Activated naive CD4-positive, alpha-beta T cell treated with anti-CD3 and anti-CD28 coated beads for 36 hours (primary cell): ENCODE measurements at regions of chr15 and their contacts with region 1.

Region 1: GRCh38 chr15:79853458-79854328 is 43.1 kb downstream of the MTHFS start:
- DNase-seq: peak; percentile 83
- H3K4me3 Mint-ChIP-seq: no peak overlapping the region
- H3K27ac Mint-ChIP-seq: no peak overlapping the region
- H3K4me1 Mint-ChIP-seq: peaks cover 17% of the 10 kb centered on the region
- H3K27me3 Mint-ChIP-seq: no peaks in the 10 kb centered on the region

Region 2: GRCh38 chr15:79339564-79340314 is 514.0 kb before region 1 on chr15:
- CTCF ChIA-PET with region 1: interaction called, 7 read pairs
- intact Hi-C with region 1: loop called (anchors 5 kb)
- DNase-seq: no peak
- H3K4me3 Mint-ChIP-seq: no peak overlapping the region
- H3K27ac Mint-ChIP-seq: no peak overlapping the region
- H3K4me1 Mint-ChIP-seq: no peaks in the 10 kb centered on the region
- H3K27me3 Mint-ChIP-seq: no peaks in the 10 kb centered on the region

Region 3: DNA sequence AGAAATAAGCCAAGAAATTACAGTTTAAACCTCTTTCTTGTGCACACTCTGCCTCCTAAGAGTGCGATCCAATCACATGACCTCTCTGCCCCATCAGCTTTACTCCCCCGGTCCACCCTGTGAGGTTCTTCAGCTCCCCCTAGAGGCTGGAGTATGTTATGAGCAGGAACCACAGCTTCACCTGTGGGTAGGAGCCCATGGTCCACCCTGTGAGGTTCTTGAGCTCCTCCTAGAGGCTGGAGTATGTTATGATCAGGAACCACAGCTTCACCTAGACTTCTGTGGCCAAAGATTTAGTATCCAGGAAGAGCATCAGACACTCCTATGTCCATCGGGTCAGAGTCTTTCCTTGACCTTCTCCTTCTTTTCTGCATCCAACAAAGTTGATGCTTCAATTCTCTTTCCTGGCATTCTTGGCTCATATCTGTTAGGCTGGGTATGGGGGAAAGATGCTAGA is 257.6 kb before region 1 on chr15:
- CTCF ChIA-PET with region 1: interaction called, 5 read pairs
- intact Hi-C with region 1: loop called (anchors 2 kb)
- DNase-seq: peak; percentile 75
- H3K4me3 Mint-ChIP-seq: no peak overlapping the region
- H3K27ac Mint-ChIP-seq: no peak overlapping the region
- H3K4me1 Mint-ChIP-seq: no peaks in the 10 kb centered on the region
- H3K27me3 Mint-ChIP-seq: peaks cover 10% of the 10 kb centered on the region

Region 4: DNA sequence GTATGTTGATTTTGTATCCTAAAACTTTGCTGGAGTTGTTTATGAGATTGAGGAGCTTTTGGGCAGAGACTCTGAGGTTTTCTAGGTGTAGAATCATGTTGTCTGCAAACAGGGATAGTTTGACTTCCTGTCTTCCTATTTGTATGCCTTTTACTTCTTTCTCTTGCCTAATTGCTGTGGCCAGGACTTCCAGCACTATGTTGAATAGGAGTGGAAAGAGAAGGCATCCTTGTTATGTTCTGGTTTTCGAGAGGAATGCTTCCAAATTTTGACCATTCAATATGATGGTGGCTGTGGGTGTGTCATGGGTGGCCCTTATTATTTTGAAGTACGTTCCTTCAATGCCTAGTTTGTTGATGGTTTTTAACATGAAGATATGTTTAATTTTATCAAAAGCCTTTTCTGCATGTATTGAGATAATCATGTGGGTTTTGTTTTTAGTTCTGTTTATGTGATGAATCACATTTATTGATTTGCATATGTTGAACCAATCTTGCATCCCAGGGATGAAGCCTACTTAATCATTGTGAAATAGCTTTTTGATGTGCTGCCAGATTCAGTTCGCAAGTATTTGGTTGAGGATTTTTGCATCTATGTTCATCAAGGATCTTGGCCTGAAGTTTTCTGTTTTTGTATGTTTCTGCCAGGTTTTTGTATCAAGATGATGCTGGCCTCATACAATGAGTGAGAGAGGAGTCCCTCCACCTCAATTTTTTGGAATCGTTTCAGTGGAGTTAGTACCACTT is 233.4 kb before region 1 on chr15:
- CTCF ChIA-PET with region 1: no interaction called
- intact Hi-C with region 1: no loop called
- DNase-seq: no peak
- H3K4me3 Mint-ChIP-seq: no peak overlapping the region
- H3K27ac Mint-ChIP-seq: no peak overlapping the region
- H3K4me1 Mint-ChIP-seq: no peaks in the 10 kb centered on the region
- H3K27me3 Mint-ChIP-seq: peaks cover 31% of the 10 kb centered on the region

Region 5: GRCh38 chr15:79837846-79838245 is 15.8 kb before region 1 on chr15:
- CTCF ChIA-PET with region 1: interaction called, 20 read pairs
- intact Hi-C with region 1: no loop called
- DNase-seq: no peak
- H3K4me3 Mint-ChIP-seq: no peak overlapping the region
- H3K27ac Mint-ChIP-seq: no peak overlapping the region
- H3K4me1 Mint-ChIP-seq: no peaks in the 10 kb centered on the region
- H3K27me3 Mint-ChIP-seq: no peaks in the 10 kb centered on the region

Region 6: DNA sequence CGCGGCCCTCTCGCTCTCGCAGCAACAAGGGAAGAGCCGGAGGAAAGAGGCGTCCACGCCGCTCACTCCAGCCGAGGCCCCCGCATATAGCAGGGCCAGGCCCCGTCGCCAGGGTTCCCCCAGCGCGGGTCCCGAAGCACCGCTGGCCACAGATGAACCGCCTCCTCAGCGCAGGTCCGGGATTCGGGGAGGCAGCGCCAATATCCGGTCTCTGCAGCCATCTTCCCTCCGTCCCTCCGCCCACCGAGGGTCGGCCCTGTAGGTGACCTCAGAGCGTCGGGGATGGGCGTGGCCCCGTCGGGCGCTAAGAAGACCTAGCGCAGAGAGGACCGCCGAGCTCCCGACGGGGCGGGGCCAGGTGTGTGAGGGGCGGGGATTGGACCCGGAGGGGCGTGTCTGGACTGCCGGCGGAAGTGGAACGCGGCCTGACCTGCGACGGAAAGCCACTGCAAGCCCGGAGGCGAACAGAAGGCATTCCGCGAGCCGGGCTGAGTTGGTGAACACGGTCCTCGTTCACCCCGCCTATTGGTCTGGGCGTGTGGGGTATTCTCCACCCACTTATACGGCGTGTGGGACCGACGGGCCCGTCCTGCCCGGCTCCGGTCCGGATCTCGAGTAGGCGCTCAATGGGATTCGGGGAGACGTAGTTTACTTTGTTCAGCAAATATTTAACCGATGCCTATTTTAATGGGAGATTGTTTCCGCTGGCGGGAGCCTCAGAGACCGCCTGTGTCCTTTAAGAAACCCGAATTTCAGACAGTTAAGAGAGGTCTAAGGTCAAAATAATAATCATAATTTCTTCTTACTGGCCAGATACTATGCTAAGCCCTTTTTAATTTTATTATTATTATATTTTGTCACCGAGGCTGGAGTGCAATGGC is 70.1 kb after region 1 on chr15:
- CTCF ChIA-PET with region 1: interaction called, 7 read pairs
- intact Hi-C with region 1: loop called (anchors 2 kb)
- DNase-seq: peak; percentile 99
- H3K4me3 Mint-ChIP-seq: peak overlapping the region; percentile 86
- H3K27ac Mint-ChIP-seq: peak overlapping the region; percentile 95
- H3K4me1 Mint-ChIP-seq: peaks cover 25% of the 10 kb centered on the region
- H3K27me3 Mint-ChIP-seq: no peaks in the 10 kb centered on the region

Region 7: GRCh38 chr15:79989682-79990081 is 136.0 kb after region 1 on chr15:
- CTCF ChIA-PET with region 1: interaction called, 28 read pairs
- intact Hi-C with region 1: loop called (anchors 1 kb)
- DNase-seq: no peak
- H3K4me3 Mint-ChIP-seq: no peak overlapping the region
- H3K27ac Mint-ChIP-seq: no peak overlapping the region
- H3K4me1 Mint-ChIP-seq: peaks cover 13% of the 10 kb centered on the region
- H3K27me3 Mint-ChIP-seq: no peaks in the 10 kb centered on the region

Region 8: GRCh38 chr15:80003171-80003570 is 149.5 kb after region 1 on chr15:
- CTCF ChIA-PET with region 1: no interaction called
- intact Hi-C with region 1: no loop called
- DNase-seq: no peak
- H3K4me3 Mint-ChIP-seq: no peak overlapping the region
- H3K27ac Mint-ChIP-seq: peak overlapping the region; percentile 51
- H3K4me1 Mint-ChIP-seq: no peaks in the 10 kb centered on the region
- H3K27me3 Mint-ChIP-seq: no peaks in the 10 kb centered on the region

Region 9: DNA sequence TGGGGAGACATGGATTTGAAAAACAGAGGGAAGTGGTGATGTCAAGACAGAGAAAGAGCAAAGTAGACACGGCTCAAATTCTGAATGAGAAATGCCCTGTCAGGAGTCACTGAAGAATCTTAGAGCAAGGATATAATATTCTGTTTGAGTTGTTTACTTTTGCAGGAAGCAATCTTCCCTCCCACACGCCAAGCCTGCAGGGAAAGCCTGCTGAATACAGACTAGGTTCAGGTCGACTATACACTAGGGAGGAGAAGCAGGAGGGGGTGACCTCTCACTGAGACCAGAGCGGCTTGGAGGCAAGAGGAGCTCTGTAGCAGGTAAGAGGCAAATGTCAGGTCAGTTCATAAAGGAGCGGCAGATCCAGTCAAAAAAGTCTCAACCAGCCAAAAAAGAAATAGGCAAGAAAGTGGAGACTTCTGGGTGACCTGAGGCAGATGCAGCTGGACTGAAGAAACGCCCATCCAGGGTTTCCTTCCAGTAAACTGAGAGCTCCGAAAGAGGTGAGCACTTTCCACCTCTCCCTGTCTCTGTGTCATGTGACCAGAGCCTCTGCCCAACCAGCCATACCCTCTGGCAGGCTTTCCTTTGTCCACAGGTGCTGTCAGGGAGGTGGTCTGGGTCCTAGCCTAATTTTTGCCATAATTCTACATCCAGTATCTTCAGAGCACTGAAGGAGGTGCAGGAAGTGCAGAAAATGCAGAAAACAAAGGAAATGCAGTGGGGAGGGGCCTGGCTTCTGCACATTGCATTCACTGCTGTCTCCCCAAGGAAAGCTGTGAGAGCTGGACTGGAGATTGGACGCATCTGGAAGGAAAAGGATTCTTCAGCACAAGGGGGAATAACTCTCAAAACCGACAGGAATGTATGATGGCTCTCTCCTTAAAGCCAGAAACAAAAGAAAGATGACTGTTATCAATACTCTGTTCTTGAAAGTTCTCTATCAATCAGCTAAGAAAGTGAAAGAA is 436.1 kb after region 1 on chr15:
- CTCF ChIA-PET with region 1: no interaction called
- intact Hi-C with region 1: no loop called
- DNase-seq: no peak
- H3K4me3 Mint-ChIP-seq: no peak overlapping the region
- H3K27ac Mint-ChIP-seq: no peak overlapping the region
- H3K4me1 Mint-ChIP-seq: no peaks in the 10 kb centered on the region
- H3K27me3 Mint-ChIP-seq: peaks cover 2% of the 10 kb centered on the region